AG04449 (cell line): ENCODE measurements at regions of chr12 and their contacts with region 1.

Region 1: GRCh38 chr12:78146365-78146772 is 315.7 kb downstream of the NAV3 start:
- DNase-seq: no peak
- H3K4me3 ChIP-seq: no peak overlapping the region
- CTCF ChIP-seq: peak; percentile 54

Region 2: DNA sequence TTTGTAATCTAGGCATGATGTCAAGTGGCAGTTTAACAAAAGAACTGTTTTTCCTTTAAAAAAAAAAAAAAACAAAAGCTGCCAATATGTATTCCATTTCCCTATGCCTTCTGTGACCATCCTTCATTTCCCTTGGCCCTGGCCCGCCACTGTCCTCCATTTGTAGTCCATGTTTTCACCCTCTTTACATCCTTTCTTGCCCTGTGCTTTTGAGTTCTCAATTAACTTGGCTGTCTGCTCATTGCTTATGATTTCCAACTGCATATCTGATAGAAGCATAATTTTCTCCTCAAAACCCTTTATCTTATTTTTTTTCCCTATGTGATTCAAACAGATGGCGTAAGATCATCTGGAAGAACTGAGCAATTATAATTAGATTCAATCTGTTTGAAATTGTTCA is 18.2 kb before region 1 on chr12:
- CTCF ChIA-PET with region 1: interaction called, 37 read pairs
- POLR2A ChIA-PET with region 1: no interaction called
- DNase-seq: no peak
- H3K4me3 ChIP-seq: no peak overlapping the region
- CTCF ChIP-seq: no peak

Region 3: GRCh38 chr12:78157199-78157598 is 10.8 kb after region 1 on chr12:
- CTCF ChIA-PET with region 1: interaction called, 33 read pairs
- POLR2A ChIA-PET with region 1: no interaction called
- DNase-seq: no peak
- H3K4me3 ChIP-seq: no peak overlapping the region
- CTCF ChIP-seq: no peak

Region 4: DNA sequence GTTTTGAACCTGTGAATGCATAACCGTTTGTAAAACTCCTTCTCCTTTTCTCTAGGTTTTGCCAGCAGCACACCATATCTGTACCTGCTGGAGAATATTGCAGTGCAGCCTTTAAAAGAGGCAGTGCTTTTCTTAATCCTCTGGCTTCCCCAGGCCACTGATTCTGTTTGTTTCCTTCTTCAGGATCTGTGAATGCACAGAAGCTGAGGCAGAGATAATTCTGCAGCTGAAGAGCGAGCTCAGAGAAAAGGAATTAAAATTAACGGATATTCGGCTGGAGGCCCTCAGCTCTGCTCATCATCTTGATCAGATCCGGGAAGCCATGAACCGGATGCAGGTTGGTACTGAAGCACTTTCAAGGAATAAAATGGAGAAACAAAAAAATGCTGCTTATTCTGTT is 33.0 kb after region 1 on chr12:
- CTCF ChIA-PET with region 1: no interaction called
- POLR2A ChIA-PET with region 1: no interaction called
- DNase-seq: no peak
- H3K4me3 ChIP-seq: no peak overlapping the region
- CTCF ChIP-seq: no peak